ENCODE measurements at regions of chr14 and their contacts with region 1.

Region 1: DNA sequence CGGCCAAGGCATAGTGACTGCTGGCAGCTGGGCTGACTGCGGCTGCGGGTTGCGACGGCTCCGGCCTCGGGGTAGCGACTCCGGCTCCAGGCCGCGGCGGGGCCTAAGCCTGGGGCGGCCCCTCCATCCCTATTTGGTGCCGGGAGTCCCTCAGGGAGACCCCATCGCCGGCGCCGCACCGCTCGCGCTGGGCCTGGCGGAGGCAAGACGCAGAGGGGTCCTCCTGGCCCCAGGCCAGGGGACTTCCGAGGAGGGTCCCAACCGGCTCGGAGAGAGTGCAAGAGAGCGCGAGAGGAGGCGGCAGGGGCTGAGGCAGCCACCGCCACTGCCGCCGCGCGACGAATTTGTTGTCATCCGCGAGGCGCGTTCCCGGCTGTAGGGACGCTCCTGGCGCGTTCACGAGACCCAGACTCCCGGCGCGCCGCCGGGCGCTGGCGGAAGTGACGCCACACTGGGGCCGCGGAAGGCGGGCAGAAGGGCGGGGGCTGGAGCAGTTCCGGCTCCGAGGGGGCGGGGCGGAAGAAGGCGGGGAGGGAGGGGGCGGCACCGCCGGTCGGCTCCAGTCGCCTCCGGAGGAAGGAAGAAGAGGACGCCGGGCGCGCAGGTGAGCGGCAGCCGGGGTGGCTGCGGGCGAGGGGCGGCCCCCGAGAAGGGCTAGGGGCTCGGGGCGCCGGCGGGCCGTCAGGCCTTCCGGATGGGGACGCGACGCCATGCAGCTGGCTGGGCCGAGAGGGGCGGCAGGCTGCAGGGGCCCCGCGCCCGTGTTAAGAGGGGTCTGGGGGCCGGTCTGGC is at the starts of genes ATG2B and GSKIP:
- DNase-seq: peak; percentile 95 to 99 (median 98)
- ATAC-seq: peak; percentile 94
- H3K4me3 ChIP-seq: peak within 1 kb of the TSS; percentile 72
- H3K4me3 Mint-ChIP-seq: peak within 1 kb of the TSS; percentile 82 to 97 (median 90)
- H3K27ac ChIP-seq: peak within 1 kb of the TSS; percentile 90
- H3K27ac Mint-ChIP-seq: peak within 1 kb of the TSS; percentile 82 to 97 (median 89)
- H3K4me1 ChIP-seq: peaks cover 19 to 27% of the 10 kb centered on the region in 2 donors
- H3K4me1 Mint-ChIP-seq: peaks cover 40 to 72% (median 60%) of the 10 kb centered on the region in 7 donors
- H3K27me3 ChIP-seq: no peaks in the 10 kb centered on the region
- H3K27me3 Mint-ChIP-seq: no peaks in the 10 kb centered on the region
- total RNA-seq, gene ATG2B: 22.7 to 43.4 (median 34.3) TPM
- total RNA-seq, gene GSKIP: 6.7 to 17.7 (median 14.9) TPM

Region 2: DNA sequence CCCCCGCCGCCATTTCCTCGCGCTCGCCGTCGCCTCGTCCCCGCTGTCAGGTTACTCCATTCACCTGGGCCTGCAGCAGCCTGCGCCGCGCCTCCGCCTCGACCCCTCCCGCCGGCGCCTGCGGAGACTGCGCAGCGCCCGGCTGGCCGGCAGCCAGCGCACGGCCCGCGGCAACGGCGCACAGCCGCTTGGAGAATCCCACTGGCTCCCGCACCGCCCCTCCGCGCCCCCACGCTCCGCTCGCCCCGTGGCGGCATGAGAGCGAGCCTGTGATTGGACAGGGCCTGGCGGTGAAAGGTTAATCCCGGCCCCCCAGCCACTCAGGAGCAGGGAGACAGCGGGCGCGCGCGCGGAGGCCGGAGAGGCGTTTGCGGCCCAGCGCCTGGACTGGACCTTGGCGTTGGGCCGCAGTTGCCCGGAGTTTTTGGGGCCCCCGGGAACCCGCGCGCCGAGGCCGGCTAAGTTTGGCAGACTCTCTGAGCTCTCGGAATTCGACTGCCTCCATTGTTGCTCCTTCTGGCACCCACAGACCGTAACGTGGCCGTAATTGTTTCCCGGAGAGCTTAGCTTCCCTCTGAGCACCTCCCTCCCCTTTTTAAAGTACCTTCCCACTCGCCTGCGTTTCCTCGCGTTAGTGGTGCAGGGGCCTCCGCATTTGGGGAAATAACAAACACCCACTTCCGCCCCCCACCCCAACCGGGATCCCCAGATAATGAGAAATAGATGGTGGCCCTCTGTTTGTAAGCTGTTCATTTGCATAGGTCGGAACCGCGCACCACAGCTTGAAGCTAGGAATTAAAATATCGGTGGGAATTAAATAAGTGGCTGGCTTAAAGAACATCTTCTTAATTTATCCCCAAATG is 1205.6 kb before region 1 on chr14 and contains the start of gene DICER1:
- CTCF ChIA-PET with region 1: no interaction called
- POLR2A ChIA-PET with region 1: no interaction called
- intact Hi-C with region 1: loop called (anchors 5 to 10 kb)
- DNase-seq: peak; percentile 84 to 98 (median 93)
- ATAC-seq: peak; percentile 92
- H3K4me3 ChIP-seq: peak within 1 kb of the TSS; percentile 87
- H3K4me3 Mint-ChIP-seq: peak within 1 kb of the TSS; percentile 94 to 99 (median 98)
- H3K27ac ChIP-seq: peak within 1 kb of the TSS; percentile 82
- H3K27ac Mint-ChIP-seq: peak within 1 kb of the TSS; percentile 97 to 100 (median 99)
- H3K4me1 ChIP-seq: peaks cover 31 to 36% of the 10 kb centered on the region in 2 donors
- H3K4me1 Mint-ChIP-seq: peaks cover 32 to 55% (median 42%) of the 10 kb centered on the region in 7 donors
- H3K27me3 ChIP-seq: no peaks in the 10 kb centered on the region
- H3K27me3 Mint-ChIP-seq: no peaks in the 10 kb centered on the region
- total RNA-seq, gene DICER1: 61.1 to 78.2 (median 67.4) TPM

Region 3: GRCh38 chr14:95841668-95842067 is 521.5 kb before region 1 on chr14:
- CTCF ChIA-PET with region 1: no interaction called
- POLR2A ChIA-PET with region 1: no interaction called
- intact Hi-C with region 1: no loop called
- DNase-seq: no peak
- ATAC-seq: no peak
- H3K4me3 ChIP-seq: no peak overlapping the region
- H3K4me3 Mint-ChIP-seq: no peak overlapping the region
- H3K27ac ChIP-seq: no peak overlapping the region
- H3K27ac Mint-ChIP-seq: no peak overlapping the region
- H3K4me1 ChIP-seq: no peaks in the 10 kb centered on the region
- H3K4me1 Mint-ChIP-seq: no peaks in the 10 kb centered on the region
- H3K27me3 ChIP-seq: no peaks in the 10 kb centered on the region
- H3K27me3 Mint-ChIP-seq: peaks cover 3 to 34% (median 24%) of the 10 kb centered on the region in 5 donors

Region 4: GRCh38 chr14:96126339-96126782 is 236.8 kb before region 1 on chr14:
- CTCF ChIA-PET with region 1: no interaction called
- POLR2A ChIA-PET with region 1: no interaction called
- intact Hi-C with region 1: loop called in 1 of 2 experiments (anchors 10 kb)
- DNase-seq: peak in 8 of 9 donors; percentile 33 to 92 (median 82)
- ATAC-seq: peak; percentile 93
- H3K4me3 ChIP-seq: peak overlapping the region; percentile 5
- H3K4me3 Mint-ChIP-seq: peak overlapping the region; percentile 60 to 92 (median 80)
- H3K27ac ChIP-seq: peak overlapping the region; percentile 80
- H3K27ac Mint-ChIP-seq: peak overlapping the region; percentile 96 to 100 (median 99)
- H3K4me1 ChIP-seq: peaks cover 15 to 32% of the 10 kb centered on the region in 2 donors
- H3K4me1 Mint-ChIP-seq: peaks cover 11 to 58% (median 49%) of the 10 kb centered on the region in 7 donors
- H3K27me3 ChIP-seq: no peaks in the 10 kb centered on the region
- H3K27me3 Mint-ChIP-seq: no peaks in the 10 kb centered on the region

Region 5: GRCh38 chr14:96297000-96297399 is 66.2 kb before region 1 on chr14:
- CTCF ChIA-PET with region 1: no interaction called
- POLR2A ChIA-PET with region 1: no interaction called
- intact Hi-C with region 1: loop called in 1 of 2 experiments (anchors 2 kb)
- DNase-seq: peak in 6 of 9 donors; percentile 7 to 45 (median 33)
- ATAC-seq: no peak
- H3K4me3 ChIP-seq: no peak overlapping the region
- H3K4me3 Mint-ChIP-seq: no peak overlapping the region
- H3K27ac ChIP-seq: no peak overlapping the region
- H3K27ac Mint-ChIP-seq: no peak overlapping the region
- H3K4me1 ChIP-seq: no peaks in the 10 kb centered on the region
- H3K4me1 Mint-ChIP-seq: no peaks in the 10 kb centered on the region
- H3K27me3 ChIP-seq: no peaks in the 10 kb centered on the region
- H3K27me3 Mint-ChIP-seq: no peaks in the 10 kb centered on the region

Region 6: DNA sequence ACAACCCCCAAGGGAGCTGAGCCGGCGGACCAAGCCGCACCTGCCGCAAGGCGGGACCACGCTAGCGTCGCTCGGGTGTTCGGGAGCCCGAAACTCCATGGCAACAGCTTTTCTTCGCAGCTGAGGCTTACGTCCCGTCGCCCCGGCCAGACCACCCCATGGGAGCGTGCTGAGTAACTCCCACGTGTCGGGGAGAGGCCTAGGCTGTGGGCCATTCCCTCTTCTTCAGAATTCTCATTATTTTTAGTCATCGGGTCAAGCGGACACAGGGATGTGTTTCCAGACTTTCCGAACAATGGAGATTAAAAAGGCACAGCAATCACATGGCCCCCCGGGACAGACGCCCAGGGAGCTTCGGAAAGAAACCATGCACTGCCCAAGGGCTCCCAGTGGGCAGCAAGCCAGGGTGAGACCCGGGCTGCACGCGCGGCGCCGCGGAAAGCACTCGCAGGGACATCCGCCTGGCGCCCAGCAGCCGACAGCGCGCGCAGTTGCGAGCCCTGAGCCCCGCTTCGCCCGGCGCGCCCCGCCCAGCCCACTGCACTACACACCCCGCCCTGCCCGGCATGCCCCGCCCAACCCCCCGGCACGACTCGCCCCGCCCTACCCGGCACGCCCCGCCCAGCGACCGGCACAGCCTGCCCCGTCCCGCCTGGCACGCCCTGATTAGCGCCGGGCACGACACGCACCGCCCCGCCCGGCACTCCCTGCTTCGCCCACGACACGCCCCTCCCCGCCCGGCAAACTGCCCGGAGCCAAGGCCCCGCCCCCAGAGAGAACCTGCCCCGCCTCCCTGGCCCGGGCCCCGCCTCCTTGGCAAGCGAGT is 28.3 kb after region 1 on chr14:
- CTCF ChIA-PET with region 1: no interaction called
- POLR2A ChIA-PET with region 1: interaction called, 8 read pairs
- intact Hi-C with region 1: loop called (anchors 1 kb)
- DNase-seq: peak; percentile 97 to 100 (median 99)
- ATAC-seq: peak; percentile 97
- H3K4me3 ChIP-seq: peak overlapping the region; percentile 90
- H3K4me3 Mint-ChIP-seq: peak overlapping the region; percentile 85 to 94 (median 92)
- H3K27ac ChIP-seq: peak overlapping the region; percentile 55
- H3K27ac Mint-ChIP-seq: peak overlapping the region in 8 of 9 donors; percentile 61 to 93 (median 86)
- H3K4me1 ChIP-seq: peaks cover 7 to 11% of the 10 kb centered on the region in 2 donors
- H3K4me1 Mint-ChIP-seq: peaks cover 0 to 7% (median 0%) of the 10 kb centered on the region in 7 donors
- H3K27me3 ChIP-seq: no peaks in the 10 kb centered on the region
- H3K27me3 Mint-ChIP-seq: peaks cover 0 to 14% (median 0%) of the 10 kb centered on the region in 5 donors

Region 7: DNA sequence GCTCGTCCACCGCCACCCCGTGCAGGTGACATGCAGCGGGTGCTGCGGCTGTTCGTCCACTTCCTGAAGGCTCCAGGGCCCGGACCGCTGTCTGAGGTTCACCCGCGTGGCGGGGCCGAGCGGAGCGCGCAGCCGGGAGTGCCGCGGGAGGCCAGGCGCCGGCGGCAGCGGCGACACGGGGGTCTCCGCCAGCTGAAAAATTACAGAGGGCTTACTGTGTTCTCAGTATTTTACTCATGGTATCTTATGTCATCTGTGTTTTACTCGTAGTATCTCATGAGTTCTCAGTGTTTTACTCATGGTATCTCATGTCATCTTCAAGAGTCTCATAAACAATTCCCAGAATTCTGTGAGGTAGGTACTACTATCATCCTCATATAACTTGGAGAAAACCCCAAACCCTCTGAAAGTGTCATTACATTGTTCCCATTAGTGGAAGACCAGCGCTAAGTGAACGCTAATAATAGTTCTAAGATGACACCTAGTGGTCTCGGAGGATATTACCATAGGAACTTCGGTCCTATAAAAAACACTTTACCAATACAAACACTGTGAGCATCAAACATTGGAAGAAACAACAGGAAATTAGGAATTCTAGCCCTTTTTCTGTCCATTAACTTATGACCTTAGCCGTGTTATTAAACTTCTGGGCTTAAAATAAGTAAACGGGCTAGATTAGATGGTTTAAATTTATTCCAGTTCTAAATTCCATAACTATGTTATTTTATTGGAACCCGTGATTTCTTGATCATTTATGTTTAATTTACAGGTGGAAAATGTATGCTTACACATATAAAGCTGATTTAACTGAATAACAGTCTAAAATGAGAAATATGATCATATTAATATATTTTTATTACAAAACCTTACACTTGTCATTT is 61.2 kb after region 1 on chr14:
- CTCF ChIA-PET with region 1: interaction called, 3 read pairs
- POLR2A ChIA-PET with region 1: no interaction called
- intact Hi-C with region 1: loop called (anchors 1 kb)
- DNase-seq: peak in 8 of 9 donors; percentile 17 to 58 (median 50)
- ATAC-seq: peak; percentile 88
- H3K4me3 ChIP-seq: peak overlapping the region; percentile 49
- H3K4me3 Mint-ChIP-seq: peak overlapping the region; percentile 60 to 84 (median 82)
- H3K27ac ChIP-seq: no peak overlapping the region
- H3K27ac Mint-ChIP-seq: peak overlapping the region in 1 of 9 donors; percentile 41
- H3K4me1 ChIP-seq: no peaks in the 10 kb centered on the region
- H3K4me1 Mint-ChIP-seq: peaks cover 0 to 5% (median 3%) of the 10 kb centered on the region in 7 donors
- H3K27me3 ChIP-seq: no peaks in the 10 kb centered on the region
- H3K27me3 Mint-ChIP-seq: peaks cover 0 to 10% (median 3%) of the 10 kb centered on the region in 5 donors

Region 8: GRCh38 chr14:96796851-96797581 is 433.9 kb after region 1 on chr14 and contains the start of gene VRK1:
- CTCF ChIA-PET with region 1: no interaction called
- POLR2A ChIA-PET with region 1: no interaction called
- intact Hi-C with region 1: loop called (anchors 1 to 10 kb)
- DNase-seq: peak; percentile 87 to 93 (median 90)
- ATAC-seq: peak; percentile 99
- H3K4me3 ChIP-seq: peak within 1 kb of the TSS; percentile 75
- H3K4me3 Mint-ChIP-seq: peak within 1 kb of the TSS; percentile 86 to 93 (median 91)
- H3K27ac ChIP-seq: peak within 1 kb of the TSS; percentile 79
- H3K27ac Mint-ChIP-seq: peak within 1 kb of the TSS; percentile 75 to 95 (median 90)
- H3K4me1 ChIP-seq: peaks cover 10 to 14% of the 10 kb centered on the region in 2 donors
- H3K4me1 Mint-ChIP-seq: peaks cover 10 to 33% (median 25%) of the 10 kb centered on the region in 7 donors
- H3K27me3 ChIP-seq: no peaks in the 10 kb centered on the region
- H3K27me3 Mint-ChIP-seq: peaks cover 0 to 10% (median 3%) of the 10 kb centered on the region in 5 donors
- total RNA-seq, gene VRK1: 28.5 to 52.2 (median 40.7) TPM

Measured in naive thymus-derived CD4-positive, alpha-beta T cell (primary cell).